Prostate gland (tissue), 2 donors: ENCODE measurements at regions of chr18 and their contacts with region 1.

Region 1: DNA sequence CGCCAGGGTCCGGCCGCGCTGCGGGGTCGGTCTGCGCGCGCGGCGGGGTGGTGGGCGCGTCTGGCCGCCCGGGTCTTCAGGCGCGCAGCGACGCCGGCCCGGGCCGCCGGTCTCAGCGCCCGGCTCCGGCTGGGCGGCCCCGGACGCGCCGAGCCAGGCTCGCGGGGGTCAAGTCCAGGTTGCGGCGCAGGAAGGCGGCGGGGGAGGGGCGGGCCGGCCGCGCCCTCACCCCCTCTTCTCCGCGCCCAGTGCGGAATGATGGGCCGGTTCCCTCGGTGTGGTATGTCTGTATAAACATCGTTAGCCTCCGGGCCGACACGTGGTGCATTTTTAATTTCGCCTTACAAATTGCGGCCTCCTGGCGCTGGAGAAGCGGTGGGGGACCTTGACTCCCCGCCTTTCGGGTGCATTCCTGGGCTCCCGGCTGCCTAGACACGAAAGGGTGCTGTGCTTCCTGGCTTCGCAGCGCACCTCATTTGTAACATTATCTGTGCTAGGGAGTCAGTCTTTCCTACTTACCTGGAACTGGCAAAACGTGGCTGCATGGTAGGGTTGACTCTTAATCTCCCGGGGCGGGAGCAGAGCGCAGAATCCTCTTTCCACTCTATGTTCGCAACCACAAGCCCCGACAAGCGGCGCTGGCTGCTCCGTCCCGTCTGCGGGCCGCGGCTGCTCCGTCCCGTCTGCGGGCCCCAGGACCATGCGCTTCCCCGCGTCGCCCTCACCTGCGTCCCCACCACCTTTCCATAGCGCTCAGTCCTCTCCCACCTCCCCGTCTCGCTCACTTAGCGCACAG is 69.0 kb downstream of the CTAGE1 start:
- DNase-seq: peak; percentile 61
- H3K4me3 ChIP-seq: peak overlapping the region; percentile 35
- H3K27ac ChIP-seq: peak overlapping the region; percentile 48 to 67
- H3K4me1 ChIP-seq: no peaks in the 10 kb centered on the region
- H3K27me3 ChIP-seq: no peaks in the 10 kb centered on the region
- CTCF ChIP-seq: no peak
- POLR2A ChIP-seq: no peak

Region 2: DNA sequence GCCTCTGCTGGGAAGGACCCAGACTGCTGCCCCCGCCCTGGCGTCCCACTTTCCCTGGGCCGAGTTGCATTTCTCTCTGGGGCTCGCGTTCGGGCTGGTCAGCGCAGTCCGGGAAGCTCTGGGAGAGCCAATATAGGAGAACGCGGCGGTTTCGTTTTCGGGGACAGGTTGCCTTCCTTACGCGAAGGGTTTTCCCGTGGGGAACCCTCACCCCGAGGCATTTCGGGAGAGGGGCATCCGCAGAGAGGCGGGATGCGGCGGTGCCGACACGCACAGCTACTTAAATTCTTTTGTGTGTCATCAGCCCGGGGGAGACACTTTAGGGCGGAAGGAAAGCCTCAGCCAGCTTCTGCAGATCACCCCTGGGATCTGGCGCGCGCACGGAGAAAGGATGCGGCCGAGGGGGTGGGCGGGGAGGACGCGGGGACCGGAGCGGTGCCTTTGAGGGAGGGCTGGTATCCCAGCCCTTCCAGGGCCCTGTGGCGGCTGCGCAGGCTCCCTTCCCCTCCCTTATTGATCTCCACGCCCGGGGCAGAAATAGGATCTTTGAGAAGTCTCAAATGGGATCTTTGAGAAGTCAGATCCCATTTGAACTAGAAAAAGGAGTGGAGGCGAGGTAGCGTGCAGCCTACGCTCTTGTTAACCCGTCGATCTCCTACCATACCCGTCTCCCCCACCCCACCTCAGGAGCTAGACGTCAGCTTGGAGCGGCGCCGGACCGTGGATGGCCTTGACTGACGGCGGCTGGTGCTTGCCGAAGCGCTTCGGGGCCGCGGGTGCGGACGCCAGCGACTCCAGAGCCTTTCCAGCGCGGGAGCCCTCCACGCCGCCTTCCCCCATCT is 178.1 kb before region 1 on chr18:
- intact Hi-C with region 1: loop called (anchors 2 kb)
- DNase-seq: peak; percentile 54
- H3K4me3 ChIP-seq: peak overlapping the region; percentile 54 to 62
- H3K27ac ChIP-seq: peak overlapping the region; percentile 66 to 79
- H3K4me1 ChIP-seq: peaks cover 9% of the 10 kb centered on the region
- H3K27me3 ChIP-seq: peaks cover 29% of the 10 kb centered on the region
- CTCF ChIP-seq: no peak
- POLR2A ChIP-seq: no peak

Region 3: DNA sequence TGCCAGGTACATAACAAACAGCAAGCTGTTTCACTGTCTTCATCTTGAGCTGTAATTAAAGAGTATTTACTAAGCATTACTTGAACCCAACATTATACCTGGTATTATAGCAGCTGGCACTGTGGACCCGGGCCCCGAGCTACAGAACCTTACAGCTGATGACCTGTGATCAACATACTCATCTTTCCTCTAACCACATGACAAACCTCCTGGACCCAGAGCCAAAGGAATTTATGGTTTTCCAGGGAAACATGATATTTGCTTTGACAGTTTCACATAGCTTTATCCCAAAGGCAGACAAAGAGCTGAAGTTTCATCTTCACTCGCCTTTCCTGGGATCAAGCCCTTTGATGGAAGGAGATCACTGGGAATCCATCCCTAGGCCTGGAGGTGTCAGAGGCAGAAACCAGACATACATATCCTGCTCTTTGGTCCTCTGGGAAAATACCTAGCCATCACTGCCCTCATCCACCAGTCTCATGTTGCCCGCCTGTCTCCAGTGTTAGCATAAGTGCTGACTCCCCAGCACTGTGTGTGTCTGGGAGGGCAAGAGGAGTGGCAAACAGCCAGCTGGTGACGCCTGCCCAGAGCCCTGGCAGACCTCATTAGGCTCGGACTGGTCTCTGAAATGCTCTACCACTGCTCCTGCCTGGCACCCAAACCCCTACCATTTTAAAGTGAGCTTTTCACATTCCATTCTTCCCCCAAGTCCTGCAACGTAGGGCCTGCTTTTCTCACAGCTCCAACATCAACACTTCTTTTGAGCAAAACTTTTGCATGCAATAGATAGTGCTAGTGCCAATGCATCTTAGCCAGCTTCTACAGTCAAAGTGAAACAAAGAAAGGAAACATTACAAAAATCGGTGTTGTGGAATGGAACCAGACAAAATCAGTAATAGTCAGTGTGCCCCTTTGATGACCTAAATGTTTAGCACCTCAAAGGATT is 207.8 kb after region 1 on chr18:
- intact Hi-C with region 1: loop called (anchors 2 kb)
- DNase-seq: no peak
- H3K4me3 ChIP-seq: no peak overlapping the region
- H3K27ac ChIP-seq: no peak overlapping the region
- H3K4me1 ChIP-seq: no peaks in the 10 kb centered on the region
- H3K27me3 ChIP-seq: no peaks in the 10 kb centered on the region
- CTCF ChIP-seq: no peak
- POLR2A ChIP-seq: no peak

Region 4: DNA sequence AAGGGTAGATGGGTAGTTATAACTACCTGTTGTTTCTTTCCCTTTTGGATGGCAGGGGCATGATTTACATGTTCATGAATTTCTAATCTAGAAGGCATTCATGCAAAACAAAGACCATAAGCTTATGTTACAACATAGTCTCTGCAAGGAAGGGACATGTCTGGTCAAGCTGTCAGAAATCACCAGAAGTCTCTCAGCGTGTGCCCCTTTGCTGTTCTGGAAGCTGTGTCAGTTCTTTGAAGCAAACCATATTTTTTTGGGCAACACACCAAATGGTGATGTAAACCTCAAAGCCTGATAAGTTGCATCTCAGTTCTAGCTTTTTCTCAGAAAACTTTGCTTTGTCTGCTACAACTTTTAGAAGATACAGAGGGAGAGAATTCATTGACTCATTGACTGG is 242.5 kb after region 1 on chr18:
- intact Hi-C with region 1: no loop called
- DNase-seq: no peak
- H3K4me3 ChIP-seq: no peak overlapping the region
- H3K27ac ChIP-seq: no peak overlapping the region
- H3K4me1 ChIP-seq: no peaks in the 10 kb centered on the region
- H3K27me3 ChIP-seq: no peaks in the 10 kb centered on the region
- CTCF ChIP-seq: no peak
- POLR2A ChIP-seq: no peak